ENCODE measurements at regions of chr14 and their contacts with region 1.

Region 1: GRCh38 chr14:72154723-72155633 is 222.7 kb downstream of the RGS6 start:
- DNase-seq: no peak
- ATAC-seq: peak in 2 of 4 donors; percentile 34 to 36
- H3K4me3 ChIP-seq: no peak overlapping the region
- H3K27ac ChIP-seq: no peak overlapping the region
- H3K4me1 ChIP-seq: peaks cover 0 to 21% (median 6%) of the 10 kb centered on the region in 12 donors
- H3K27me3 ChIP-seq: no peaks in the 10 kb centered on the region
- CTCF ChIP-seq: no peak
- POLR2A ChIP-seq: no peak

Region 2: DNA sequence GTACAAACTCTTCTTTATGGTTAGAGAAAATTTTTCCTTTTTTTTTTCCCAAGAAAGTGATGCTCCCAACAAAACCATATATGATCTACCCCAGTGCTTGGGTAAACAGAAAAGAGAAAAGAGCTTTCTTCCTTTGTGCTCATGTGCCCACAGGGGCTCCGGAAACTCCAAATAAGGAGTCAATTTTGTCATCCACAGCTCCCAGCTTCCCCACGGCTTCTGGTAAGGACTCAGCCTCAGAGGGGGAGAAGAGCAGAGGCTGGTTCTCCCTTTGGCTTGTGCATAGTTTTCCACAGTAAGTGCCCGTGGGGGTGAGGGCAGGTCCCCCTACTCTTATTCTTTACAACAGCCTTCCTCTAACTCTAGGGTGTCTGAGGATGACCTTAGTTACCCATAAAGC is 236.0 kb before region 1 on chr14:
- intact Hi-C with region 1: no loop called
- DNase-seq: peak in 1 of 5 donors; percentile 23
- ATAC-seq: no peak
- H3K4me3 ChIP-seq: no peak overlapping the region
- H3K27ac ChIP-seq: no peak overlapping the region
- H3K4me1 ChIP-seq: no peaks in the 10 kb centered on the region
- H3K27me3 ChIP-seq: no peaks in the 10 kb centered on the region
- CTCF ChIP-seq: no peak
- POLR2A ChIP-seq: no peak

Region 3: DNA sequence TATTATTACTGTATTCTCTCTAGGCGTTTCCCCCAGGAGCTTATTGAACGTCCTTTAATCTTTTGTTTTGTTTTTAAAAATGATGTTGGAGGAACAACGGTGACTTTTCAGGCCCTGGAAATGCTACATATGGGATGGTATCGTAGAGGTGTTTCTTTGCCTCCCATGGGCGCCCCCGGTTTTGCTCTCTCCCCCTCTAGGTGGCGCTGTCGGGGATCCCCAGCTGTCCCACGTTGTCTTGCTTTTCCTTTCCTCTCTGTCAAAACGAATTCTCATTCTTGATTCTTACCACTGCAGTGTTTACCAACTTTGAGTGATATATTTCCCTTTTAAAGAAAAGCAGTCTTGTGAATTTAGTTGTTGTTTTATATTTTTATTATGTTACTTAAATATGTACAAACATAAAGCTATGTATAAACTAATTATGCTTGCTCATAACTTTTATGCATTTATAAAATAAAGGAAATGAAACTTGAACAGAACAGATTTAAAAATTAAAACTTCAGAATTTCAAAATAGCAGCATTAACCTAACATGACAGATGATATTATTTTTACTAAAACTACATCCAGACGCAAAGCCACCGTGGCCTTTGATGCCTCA is 50.9 kb before region 1 on chr14:
- intact Hi-C with region 1: loop called in 1 of 10 experiments (anchors 5 kb)
- DNase-seq: no peak
- ATAC-seq: no peak
- H3K4me3 ChIP-seq: no peak overlapping the region
- H3K27ac ChIP-seq: no peak overlapping the region
- H3K4me1 ChIP-seq: peaks cover 0 to 15% (median 0%) of the 10 kb centered on the region in 12 donors
- H3K27me3 ChIP-seq: no peaks in the 10 kb centered on the region
- CTCF ChIP-seq: peak; percentile 9 to 52 (median 40)
- POLR2A ChIP-seq: no peak

Region 4: GRCh38 chr14:72752034-72752412 is 597.0 kb after region 1 on chr14:
- intact Hi-C with region 1: no loop called
- DNase-seq: no peak
- ATAC-seq: peak in 3 of 4 donors; percentile 22 to 38 (median 27)
- H3K4me3 ChIP-seq: no peak overlapping the region
- H3K27ac ChIP-seq: no peak overlapping the region
- H3K4me1 ChIP-seq: peaks cover 0 to 14% (median 0%) of the 10 kb centered on the region in 12 donors
- H3K27me3 ChIP-seq: no peaks in the 10 kb centered on the region
- CTCF ChIP-seq: no peak
- POLR2A ChIP-seq: no peak

Region 5: GRCh38 chr14:74062829-74063190 is 1907.8 kb after region 1 on chr14:
- intact Hi-C with region 1: no loop called
- DNase-seq: no peak
- ATAC-seq: no peak
- H3K4me3 ChIP-seq: no peak overlapping the region
- H3K27ac ChIP-seq: no peak overlapping the region
- H3K4me1 ChIP-seq: peaks cover 0 to 5% (median 0%) of the 10 kb centered on the region in 12 donors
- H3K27me3 ChIP-seq: no peaks in the 10 kb centered on the region
- CTCF ChIP-seq: no peak
- POLR2A ChIP-seq: no peak

Measured in heart left ventricle (tissue), 16 donors.